ENCODE measurements at regions of chr3 and their contacts with region 1.

Region 1: GRCh38 chr3:112642912-112643506 is 2.1 kb upstream of the CCDC80 start:
- DNase-seq: peak; percentile 73 to 90
- ATAC-seq: peak; percentile 93 to 97 (median 94)
- H3K4me3 ChIP-seq: peak overlapping the region; percentile 16
- H3K4me3 Mint-ChIP-seq: peak overlapping the region; percentile 86
- H3K27ac ChIP-seq: no peak overlapping the region
- H3K27ac Mint-ChIP-seq: peak overlapping the region; percentile 64 to 83
- H3K4me1 ChIP-seq: peaks cover 18% of the 10 kb centered on the region
- H3K4me1 Mint-ChIP-seq: peaks cover 17 to 23% of the 10 kb centered on the region in 2 donors
- H3K27me3 ChIP-seq: peaks cover 11% of the 10 kb centered on the region
- H3K27me3 Mint-ChIP-seq: peaks cover 8 to 9% of the 10 kb centered on the region in 2 donors
- CTCF ChIP-seq: peak; percentile 75

Region 2: GRCh38 chr3:112699436-112699978 is 56.5 kb after region 1 on chr3:
- intact Hi-C with region 1: loop called (anchors 2 kb)
- DNase-seq: no peak
- ATAC-seq: no peak
- H3K4me3 ChIP-seq: no peak overlapping the region
- H3K4me3 Mint-ChIP-seq: no peak overlapping the region
- H3K27ac ChIP-seq: no peak overlapping the region
- H3K27ac Mint-ChIP-seq: no peak overlapping the region
- H3K4me1 ChIP-seq: no peaks in the 10 kb centered on the region
- H3K4me1 Mint-ChIP-seq: peaks cover 0 to 10% of the 10 kb centered on the region in 2 donors
- H3K27me3 ChIP-seq: no peaks in the 10 kb centered on the region
- H3K27me3 Mint-ChIP-seq: peaks cover 5 to 23% of the 10 kb centered on the region in 2 donors
- CTCF ChIP-seq: no peak

Region 3: DNA sequence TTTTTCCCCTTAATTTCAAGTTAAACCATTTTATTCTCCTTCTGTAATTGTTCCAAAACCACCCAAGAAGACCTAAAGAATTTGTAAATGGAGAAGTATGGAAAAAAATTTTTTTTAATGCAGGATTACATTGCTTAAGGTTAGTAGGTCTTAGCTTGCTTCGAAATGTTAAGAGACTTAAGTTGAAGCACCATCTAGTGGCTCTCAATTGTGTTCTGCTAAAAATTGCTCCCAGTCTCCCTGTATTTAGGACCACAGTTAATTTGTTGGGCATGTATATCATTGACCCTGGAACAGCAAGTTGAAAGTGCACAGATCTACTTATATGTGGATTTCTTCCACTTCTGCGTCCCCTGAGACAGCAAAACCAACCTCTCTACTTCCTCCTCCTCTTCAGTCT is 171.3 kb after region 1 on chr3:
- intact Hi-C with region 1: loop called (anchors 2 kb)
- DNase-seq: peak in 1 of 2 donors; percentile 40
- ATAC-seq: no peak
- H3K4me3 ChIP-seq: no peak overlapping the region
- H3K4me3 Mint-ChIP-seq: no peak overlapping the region
- H3K27ac ChIP-seq: no peak overlapping the region
- H3K27ac Mint-ChIP-seq: no peak overlapping the region
- H3K4me1 ChIP-seq: peaks cover 7% of the 10 kb centered on the region
- H3K4me1 Mint-ChIP-seq: peaks cover 12 to 14% of the 10 kb centered on the region in 2 donors
- H3K27me3 ChIP-seq: no peaks in the 10 kb centered on the region
- H3K27me3 Mint-ChIP-seq: no peaks in the 10 kb centered on the region
- CTCF ChIP-seq: no peak

Region 4: DNA sequence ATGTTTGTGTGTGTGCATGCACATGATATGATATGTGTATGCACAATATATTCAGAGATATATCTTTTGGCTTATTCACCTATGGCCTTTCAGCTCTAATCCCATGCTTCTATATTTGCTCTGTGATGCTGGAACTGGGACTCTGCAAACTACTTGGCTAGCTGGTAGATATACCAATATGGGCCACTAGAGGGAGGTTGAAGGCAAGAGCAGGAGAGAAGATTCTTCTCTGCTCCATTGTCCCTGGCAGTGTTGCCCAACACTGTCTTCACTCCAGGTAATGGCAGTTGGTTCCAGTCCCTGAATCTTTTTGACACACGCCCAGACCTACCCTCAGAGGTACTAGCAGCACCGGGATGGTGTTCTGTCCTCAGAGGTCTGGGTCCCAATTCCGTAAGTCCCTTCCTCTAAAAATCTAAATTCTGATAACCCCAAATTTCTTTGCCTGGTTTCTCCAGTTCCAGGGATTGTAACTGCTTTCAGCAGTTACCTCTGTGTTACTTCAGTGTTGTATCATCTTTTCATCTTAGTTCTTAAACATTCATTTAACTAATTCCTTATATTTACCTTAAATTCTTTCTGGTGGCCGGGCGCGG is 392.5 kb after region 1 on chr3:
- intact Hi-C with region 1: loop called (anchors 5 kb)
- DNase-seq: peak in 1 of 2 donors; percentile 76
- ATAC-seq: peak; percentile 76 to 97 (median 90)
- H3K4me3 ChIP-seq: no peak overlapping the region
- H3K4me3 Mint-ChIP-seq: no peak overlapping the region
- H3K27ac ChIP-seq: no peak overlapping the region
- H3K27ac Mint-ChIP-seq: no peak overlapping the region
- H3K4me1 ChIP-seq: no peaks in the 10 kb centered on the region
- H3K4me1 Mint-ChIP-seq: no peaks in the 10 kb centered on the region
- H3K27me3 ChIP-seq: no peaks in the 10 kb centered on the region
- H3K27me3 Mint-ChIP-seq: no peaks in the 10 kb centered on the region
- CTCF ChIP-seq: peak; percentile 88